ENCODE measurements at regions of chr18 and their contacts with region 1.

Region 1: DNA sequence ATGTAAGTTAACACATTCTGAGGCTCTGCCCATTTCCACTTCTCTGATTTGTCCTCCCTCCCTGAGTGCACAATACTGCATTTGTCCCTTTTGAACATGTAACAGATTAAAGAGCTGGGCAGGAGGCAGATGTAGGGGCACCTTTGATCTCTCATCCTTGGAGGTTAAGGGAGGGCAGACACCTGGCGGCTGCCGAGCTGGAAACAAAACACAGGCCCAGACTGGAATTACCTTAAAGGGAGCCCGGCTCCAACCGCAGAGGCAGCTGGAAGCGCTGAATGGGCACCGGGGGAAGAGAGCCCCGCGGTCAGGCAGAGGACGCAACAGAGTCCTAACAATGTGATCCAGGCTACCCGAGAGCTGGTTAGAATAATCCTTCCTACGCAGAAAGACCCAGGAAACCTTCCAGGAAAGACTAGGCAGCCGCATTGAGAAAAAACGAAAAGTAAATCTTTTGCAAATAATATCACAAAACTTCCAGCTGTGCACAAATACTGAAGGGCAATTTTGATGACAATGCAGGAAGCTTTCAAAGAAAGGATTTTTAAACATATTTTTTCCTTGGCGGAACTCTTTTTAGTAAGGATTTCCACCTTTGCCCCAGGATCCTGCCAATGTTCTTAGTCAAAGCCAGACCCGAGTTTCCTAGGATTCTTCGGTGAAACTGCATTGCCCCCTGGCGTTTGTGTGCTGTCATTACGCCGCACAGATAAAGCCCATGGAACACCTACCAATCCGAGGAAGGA is 216.0 kb downstream of the TGIF1 start:
- DNase-seq: peak; percentile 99
- ATAC-seq: peak; percentile 90
- H3K4me3 ChIP-seq: peak overlapping the region; percentile 36 to 53 (median 42); a peak in 5 of 6 replicates
- H3K27ac ChIP-seq: peak overlapping the region; percentile 85
- H3K4me1 ChIP-seq: peaks cover 55% of the 10 kb centered on the region
- H3K27me3 ChIP-seq: no peaks in the 10 kb centered on the region
- CTCF ChIP-seq: peak; percentile 91
- EP300 ChIP-seq: peak; percentile 74 to 98; a peak in 3 of 4 replicates
- POLR2A ChIP-seq: peak; percentile 24 to 79; a peak in 3 of 4 replicates
- RAD21 ChIP-seq: peak; percentile 86

Region 2: GRCh38 chr18:3281456-3282400 is 384.2 kb before region 1 on chr18:
- CTCF ChIA-PET with region 1: interaction called, 29 read pairs
- POLR2A ChIA-PET with region 1: interaction called, 8 read pairs
- in situ Hi-C with region 1: loop called (anchors 5 kb)
- intact Hi-C with region 1: loop called (anchors 1 kb)
- DNase-seq: peak; percentile 67
- ATAC-seq: peak; percentile 64
- H3K4me3 ChIP-seq: no peak overlapping the region
- H3K27ac ChIP-seq: no peak overlapping the region
- H3K4me1 ChIP-seq: peaks cover 32% of the 10 kb centered on the region
- H3K27me3 ChIP-seq: peaks cover 0 to 17% of the 10 kb centered on the region in 2 experiments; a peak in 3 of 5 replicates
- CTCF ChIP-seq: peak; percentile 71
- EP300 ChIP-seq: no peak
- POLR2A ChIP-seq: no peak
- RAD21 ChIP-seq: peak; percentile 63

Region 3: GRCh38 chr18:3447895-3448837 is 217.8 kb before region 1 on chr18:
- CTCF ChIA-PET with region 1: no interaction called
- POLR2A ChIA-PET with region 1: interaction called, 53 read pairs
- in situ Hi-C with region 1: loop called (anchors 5 kb)
- intact Hi-C with region 1: loop called (anchors 2 kb)
- DNase-seq: peak; percentile 93
- ATAC-seq: peak; percentile 85
- H3K4me3 ChIP-seq: peak overlapping the region; percentile 68 to 93 (median 93)
- H3K27ac ChIP-seq: peak overlapping the region; percentile 88
- H3K4me1 ChIP-seq: peaks cover 19% of the 10 kb centered on the region
- H3K27me3 ChIP-seq: no peaks in the 10 kb centered on the region; a peak in 1 of 5 replicates
- CTCF ChIP-seq: peak; percentile 36
- EP300 ChIP-seq: peak in 1 of 2 experiments; percentile 44; a peak in 2 of 4 replicates
- POLR2A ChIP-seq: peak; percentile 84 to 90
- RAD21 ChIP-seq: peak; percentile 14; the same call in 1 of the 2 replicates

Region 4: GRCh38 chr18:3514312-3515216 is 151.4 kb before region 1 on chr18:
- CTCF ChIA-PET with region 1: no interaction called
- POLR2A ChIA-PET with region 1: no interaction called
- in situ Hi-C with region 1: no loop called
- intact Hi-C with region 1: no loop called
- DNase-seq: no peak
- ATAC-seq: no peak
- H3K4me3 ChIP-seq: no peak overlapping the region
- H3K27ac ChIP-seq: no peak overlapping the region
- H3K4me1 ChIP-seq: no peaks in the 10 kb centered on the region
- H3K27me3 ChIP-seq: peaks cover 0 to 17% of the 10 kb centered on the region in 2 experiments; a peak in 1 of 5 replicates
- CTCF ChIP-seq: no peak
- EP300 ChIP-seq: no peak
- POLR2A ChIP-seq: no peak
- RAD21 ChIP-seq: no peak

Region 5: DNA sequence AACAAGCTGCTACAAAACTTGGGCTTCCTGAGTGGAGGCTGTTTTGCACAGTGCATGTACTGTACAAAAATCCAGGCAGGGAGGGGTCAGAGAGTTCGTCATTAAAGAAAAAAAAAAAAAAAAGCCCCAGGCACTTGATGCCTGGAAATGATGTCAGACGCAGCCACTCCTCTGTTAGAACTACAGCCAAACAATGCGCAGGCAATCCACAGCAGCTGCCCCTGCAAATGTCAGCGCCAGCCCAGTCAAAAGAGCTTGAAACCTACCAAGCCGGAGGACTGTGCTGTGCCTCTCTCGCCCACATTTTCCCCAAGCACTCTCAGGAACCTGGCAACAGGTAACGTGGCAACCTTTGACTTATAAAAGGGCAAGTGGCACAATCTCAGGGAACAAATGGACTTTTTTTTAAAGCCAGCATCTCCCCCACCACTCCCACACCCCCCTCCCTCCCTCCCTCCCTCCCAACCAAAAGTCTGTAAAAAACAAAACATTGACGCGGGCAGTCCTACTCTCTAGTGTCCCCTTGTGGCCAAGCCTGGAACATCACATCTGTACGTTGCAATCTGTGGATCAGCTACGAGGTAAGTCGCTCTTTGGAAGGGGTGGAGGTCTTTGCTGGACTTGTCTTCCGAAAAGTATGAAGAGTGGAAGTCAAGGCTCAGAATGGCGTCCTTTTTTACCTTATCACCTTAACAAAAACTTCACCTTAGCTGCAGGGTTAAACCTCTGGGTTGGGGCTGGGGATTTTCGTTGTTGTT is 71.9 kb before region 1 on chr18:
- CTCF ChIA-PET with region 1: interaction called, 20 read pairs
- POLR2A ChIA-PET with region 1: interaction called, 271 read pairs
- in situ Hi-C with region 1: loop called (anchors 5 kb)
- intact Hi-C with region 1: loop called (anchors 1 kb)
- DNase-seq: peak; percentile 96
- ATAC-seq: peak; percentile 80
- H3K4me3 ChIP-seq: peak overlapping the region; percentile 73 to 94 (median 78)
- H3K27ac ChIP-seq: peak overlapping the region; percentile 96
- H3K4me1 ChIP-seq: peaks cover 75% of the 10 kb centered on the region
- H3K27me3 ChIP-seq: no peaks in the 10 kb centered on the region; a peak in 1 of 5 replicates
- CTCF ChIP-seq: peak; percentile 80
- EP300 ChIP-seq: peak in 1 of 2 experiments; percentile 54; a peak in 1 of 4 replicates
- POLR2A ChIP-seq: peak; percentile 59 to 64
- RAD21 ChIP-seq: 0 out of 2 replicates have a peak, but pooled peaks have one; percentile 9

Region 6: GRCh38 chr18:3623769-3624545 is 42.0 kb before region 1 on chr18:
- CTCF ChIA-PET with region 1: no interaction called
- POLR2A ChIA-PET with region 1: interaction called, 107 read pairs
- in situ Hi-C with region 1: no loop called
- intact Hi-C with region 1: loop called (anchors 1 kb)
- DNase-seq: peak; percentile 98
- ATAC-seq: peak; percentile 96
- H3K4me3 ChIP-seq: peak overlapping the region; percentile 37 to 64 (median 52)
- H3K27ac ChIP-seq: peak overlapping the region; percentile 94
- H3K4me1 ChIP-seq: peaks cover 81% of the 10 kb centered on the region
- H3K27me3 ChIP-seq: peaks cover 0 to 1% of the 10 kb centered on the region in 2 experiments; a peak in 1 of 5 replicates
- CTCF ChIP-seq: peak; percentile 19; the same call in 1 of the 2 replicates
- EP300 ChIP-seq: peak; percentile 23 to 72
- POLR2A ChIP-seq: peak; percentile 93 to 94
- RAD21 ChIP-seq: peak; percentile 61

Region 7: GRCh38 chr18:3910512-3910911 is 244.6 kb after region 1 on chr18:
- CTCF ChIA-PET with region 1: no interaction called
- POLR2A ChIA-PET with region 1: no interaction called
- in situ Hi-C with region 1: no loop called
- intact Hi-C with region 1: no loop called
- DNase-seq: no peak
- ATAC-seq: no peak
- H3K4me3 ChIP-seq: no peak overlapping the region
- H3K27ac ChIP-seq: no peak overlapping the region
- H3K4me1 ChIP-seq: peaks cover 11% of the 10 kb centered on the region
- H3K27me3 ChIP-seq: peaks cover 0 to 3% of the 10 kb centered on the region in 2 experiments; a peak in 1 of 5 replicates
- CTCF ChIP-seq: no peak
- EP300 ChIP-seq: no peak
- POLR2A ChIP-seq: no peak
- RAD21 ChIP-seq: no peak

Measured in HepG2 (cell line).